ENCODE measurements at regions of chr6 and their contacts with region 1.

Region 1: GRCh38 chr6:7312616-7313504 is at the start of gene SSR1:
- DNase-seq: peak; percentile 85
- ATAC-seq: peak; percentile 96
- H3K4me3 ChIP-seq: peak within 1 kb of the TSS; percentile 82 to 98
- H3K27ac ChIP-seq: peak within 1 kb of the TSS; percentile 89
- H3K4me1 ChIP-seq: peaks cover 18 to 31% of the 10 kb centered on the region in 2 experiments
- H3K27me3 ChIP-seq: no peaks in the 10 kb centered on the region
- CTCF ChIP-seq: no peak
- POLR2A ChIP-seq: peak; percentile 89
- RAD21 ChIP-seq: no peak
- total RNA-seq, gene SSR1: 127 TPM

Region 2: GRCh38 chr6:7324520-7324919 is 11.7 kb after region 1 on chr6:
- CTCF ChIA-PET with region 1: no interaction called
- POLR2A ChIA-PET with region 1: no interaction called
- RAD21 ChIA-PET with region 1: no interaction called
- intact Hi-C with region 1: no loop called
- DNase-seq: no peak
- ATAC-seq: no peak
- H3K4me3 ChIP-seq: no peak overlapping the region
- H3K27ac ChIP-seq: no peak overlapping the region
- H3K4me1 ChIP-seq: no peaks in the 10 kb centered on the region
- H3K27me3 ChIP-seq: no peaks in the 10 kb centered on the region
- CTCF ChIP-seq: no peak
- POLR2A ChIP-seq: no peak
- RAD21 ChIP-seq: no peak

Region 3: DNA sequence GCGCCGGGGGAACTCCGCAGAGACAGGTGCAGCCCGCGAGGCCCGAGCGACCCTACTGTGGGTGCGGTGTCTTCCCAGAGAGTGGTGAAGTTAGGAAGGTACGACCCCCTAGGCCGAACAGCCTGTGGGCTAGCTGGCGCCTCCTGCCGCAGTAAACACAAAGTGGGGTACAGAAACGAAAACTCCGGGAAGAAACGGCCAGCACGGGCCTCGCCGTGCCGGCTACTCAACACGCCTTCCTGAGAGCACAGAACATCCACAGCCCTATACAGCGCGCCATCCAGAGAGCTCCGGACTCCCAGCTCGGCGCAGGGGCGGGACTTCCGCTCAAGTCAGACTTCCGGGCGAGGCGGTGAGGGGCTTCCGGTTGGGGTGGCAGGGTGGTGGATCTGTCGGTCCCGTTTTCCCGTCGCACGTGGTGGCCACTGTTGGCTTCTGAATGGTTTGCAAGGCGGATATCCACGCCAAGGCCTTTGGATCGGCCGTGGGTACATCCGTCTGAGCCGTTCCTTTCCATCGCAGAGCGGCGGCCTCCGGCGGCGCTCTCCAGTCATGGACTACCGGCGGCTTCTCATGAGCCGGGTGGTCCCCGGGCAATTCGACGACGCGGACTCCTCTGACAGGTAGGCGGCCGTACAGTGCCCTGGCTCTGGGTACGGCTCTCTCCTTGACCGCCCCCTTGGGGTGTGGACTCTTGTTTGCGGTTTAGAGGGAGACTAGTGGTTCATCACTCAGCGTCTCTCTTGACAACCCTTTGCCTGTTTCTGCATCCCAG is 76.8 kb after region 1 on chr6 and contains the starts of genes CAGE1 and RIOK1:
- CTCF ChIA-PET with region 1: no interaction called
- POLR2A ChIA-PET with region 1: interaction called, 3 read pairs
- RAD21 ChIA-PET with region 1: no interaction called
- intact Hi-C with region 1: loop called (anchors 1 kb)
- DNase-seq: peak; percentile 91
- ATAC-seq: peak; percentile 96
- H3K4me3 ChIP-seq: peak within 1 kb of the TSS; percentile 91 to 96
- H3K27ac ChIP-seq: peak within 1 kb of the TSS; percentile 84
- H3K4me1 ChIP-seq: peaks cover 5 to 21% of the 10 kb centered on the region in 2 experiments; a peak in 3 of 4 replicates
- H3K27me3 ChIP-seq: no peaks in the 10 kb centered on the region
- CTCF ChIP-seq: peak in 1 of 3 experiments; percentile 18; a peak in 1 of 6 replicates
- POLR2A ChIP-seq: peak; percentile 93
- RAD21 ChIP-seq: peak; percentile 17; the same call in 1 of the 2 replicates
- total RNA-seq, gene CAGE1: 0.20 TPM
- total RNA-seq, gene RIOK1: 39.0 TPM

Region 4: DNA sequence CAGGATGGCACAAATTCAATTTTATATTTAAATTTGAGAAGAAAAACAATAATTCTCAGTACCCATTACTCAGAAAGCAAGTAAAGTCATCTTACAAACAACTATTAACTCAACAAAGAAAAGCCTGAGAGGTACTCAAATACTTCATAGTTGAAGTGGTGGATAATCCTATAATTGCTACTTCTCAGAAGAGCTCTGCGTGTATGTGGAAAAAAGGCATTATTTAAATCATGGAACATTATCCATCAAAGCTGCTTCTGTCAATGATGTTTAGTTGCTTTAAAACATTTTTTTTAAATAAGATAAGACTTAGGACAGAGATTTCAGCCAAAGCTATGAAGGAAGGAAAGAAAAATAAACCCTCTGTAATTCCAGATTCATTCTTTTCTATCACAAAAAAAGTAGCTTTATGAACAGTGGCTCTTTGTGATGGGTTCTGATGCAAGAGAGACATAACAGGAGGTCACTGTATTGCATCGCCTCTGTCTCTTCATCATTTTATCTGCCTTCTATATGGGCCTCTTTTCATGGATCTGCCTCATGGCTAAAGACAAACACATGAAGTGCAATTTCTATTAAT is 1490.4 kb after region 1 on chr6:
- CTCF ChIA-PET with region 1: no interaction called
- POLR2A ChIA-PET with region 1: no interaction called
- RAD21 ChIA-PET with region 1: no interaction called
- intact Hi-C with region 1: no loop called
- DNase-seq: no peak
- ATAC-seq: no peak
- H3K4me3 ChIP-seq: no peak overlapping the region
- H3K27ac ChIP-seq: no peak overlapping the region
- H3K4me1 ChIP-seq: no peaks in the 10 kb centered on the region
- H3K27me3 ChIP-seq: no peaks in the 10 kb centered on the region
- CTCF ChIP-seq: no peak
- POLR2A ChIP-seq: no peak
- RAD21 ChIP-seq: no peak